Activated B cell treated with CpG ODN at 0.5 μM for 24 hours (primary cell): ENCODE measurements at regions of chrX and their contacts with region 1.

Region 1: DNA sequence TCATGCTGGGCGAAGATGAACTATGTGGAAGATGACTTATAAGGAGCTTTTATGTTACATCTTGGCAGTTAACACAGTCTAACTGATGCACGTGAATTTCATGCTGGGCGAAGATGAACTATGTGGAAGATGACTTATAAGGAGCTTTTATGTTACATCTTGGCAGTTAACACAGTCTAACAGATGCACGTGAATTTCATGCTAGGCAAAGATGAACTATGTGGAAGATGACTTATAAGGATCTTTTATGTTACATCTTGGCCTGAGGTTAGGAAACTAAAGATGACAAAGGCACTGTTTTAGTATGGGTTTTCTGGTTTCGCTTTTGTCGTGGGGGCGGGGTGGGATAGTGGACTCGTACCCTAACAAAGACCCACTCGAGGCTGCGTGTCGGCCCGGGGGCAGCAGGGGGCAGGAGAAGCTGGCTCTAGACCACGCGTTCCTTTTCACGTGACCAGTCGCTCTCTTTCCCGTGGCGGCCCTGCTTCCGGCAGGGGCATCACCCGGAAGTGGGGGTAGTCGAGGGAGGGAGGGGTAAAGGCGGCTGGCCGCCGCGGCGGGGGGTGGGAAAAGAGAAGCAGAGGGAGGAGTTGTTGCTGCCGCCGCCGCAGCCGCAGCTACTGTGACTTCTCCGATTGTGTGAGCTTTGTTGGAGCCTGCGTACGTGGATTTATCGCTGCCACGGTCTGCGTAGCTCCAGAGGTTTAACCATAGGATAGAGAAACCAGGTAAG is at the start of gene ATP7A:
- DNase-seq: peak; percentile 72
- ATAC-seq: peak; percentile 92
- H3K4me3 Mint-ChIP-seq: peak within 1 kb of the TSS; percentile 96
- H3K27ac Mint-ChIP-seq: peak within 1 kb of the TSS; percentile 93
- H3K4me1 Mint-ChIP-seq: peaks cover 21% of the 10 kb centered on the region
- H3K27me3 Mint-ChIP-seq: no peaks in the 10 kb centered on the region
- CTCF ChIP-seq: no peak
- total RNA-seq, gene ATP7A: 8.2 and 9.4 TPM in 2 replicates

Region 2: DNA sequence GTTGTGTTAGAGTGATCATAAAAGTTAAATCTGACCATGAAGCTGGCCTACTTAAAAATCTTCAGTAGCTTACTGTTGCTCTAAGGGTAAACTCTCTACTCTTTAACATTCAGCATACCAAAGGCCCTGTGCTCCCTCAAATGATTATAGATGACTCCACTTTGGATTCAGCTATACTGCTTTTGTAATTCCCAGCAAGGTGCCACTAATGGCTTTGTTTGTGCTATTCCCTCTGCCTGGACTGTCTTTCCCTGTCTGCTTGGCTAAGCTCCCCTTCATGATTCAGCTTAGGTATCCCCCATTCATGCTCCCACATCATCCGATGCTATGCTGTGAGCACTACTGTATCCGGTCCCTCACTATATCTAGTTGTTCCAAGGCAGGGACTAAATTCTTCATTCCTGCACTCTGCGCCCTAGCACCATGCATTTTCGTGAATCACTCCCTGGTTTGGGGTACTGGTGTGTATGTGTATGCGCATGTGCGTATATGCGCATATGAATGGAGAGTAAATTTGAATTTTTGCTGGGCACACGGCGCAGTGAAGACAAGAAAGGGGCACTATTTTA is 1737.9 kb before region 1 on chrX:
- CTCF ChIA-PET with region 1: no interaction called
- POLR2A ChIA-PET with region 1: no interaction called
- intact Hi-C with region 1: loop called (anchors 2 kb)
- DNase-seq: no peak
- ATAC-seq: peak; percentile 51
- H3K4me3 Mint-ChIP-seq: peak overlapping the region; percentile 97
- H3K27ac Mint-ChIP-seq: peak overlapping the region; percentile 92
- H3K4me1 Mint-ChIP-seq: peaks cover 42% of the 10 kb centered on the region
- H3K27me3 Mint-ChIP-seq: no peaks in the 10 kb centered on the region
- CTCF ChIP-seq: no peak

Region 3: GRCh38 chrX:78024349-78025108 is 114.3 kb after region 1 on chrX:
- CTCF ChIA-PET with region 1: interaction called, 24 read pairs
- POLR2A ChIA-PET with region 1: interaction called, 6 read pairs
- intact Hi-C with region 1: loop called (anchors 1 kb)
- DNase-seq: peak; percentile 12
- ATAC-seq: peak; percentile 60
- H3K4me3 Mint-ChIP-seq: no peak overlapping the region
- H3K27ac Mint-ChIP-seq: no peak overlapping the region
- H3K4me1 Mint-ChIP-seq: no peaks in the 10 kb centered on the region
- H3K27me3 Mint-ChIP-seq: no peaks in the 10 kb centered on the region
- CTCF ChIP-seq: no peak

Region 4: DNA sequence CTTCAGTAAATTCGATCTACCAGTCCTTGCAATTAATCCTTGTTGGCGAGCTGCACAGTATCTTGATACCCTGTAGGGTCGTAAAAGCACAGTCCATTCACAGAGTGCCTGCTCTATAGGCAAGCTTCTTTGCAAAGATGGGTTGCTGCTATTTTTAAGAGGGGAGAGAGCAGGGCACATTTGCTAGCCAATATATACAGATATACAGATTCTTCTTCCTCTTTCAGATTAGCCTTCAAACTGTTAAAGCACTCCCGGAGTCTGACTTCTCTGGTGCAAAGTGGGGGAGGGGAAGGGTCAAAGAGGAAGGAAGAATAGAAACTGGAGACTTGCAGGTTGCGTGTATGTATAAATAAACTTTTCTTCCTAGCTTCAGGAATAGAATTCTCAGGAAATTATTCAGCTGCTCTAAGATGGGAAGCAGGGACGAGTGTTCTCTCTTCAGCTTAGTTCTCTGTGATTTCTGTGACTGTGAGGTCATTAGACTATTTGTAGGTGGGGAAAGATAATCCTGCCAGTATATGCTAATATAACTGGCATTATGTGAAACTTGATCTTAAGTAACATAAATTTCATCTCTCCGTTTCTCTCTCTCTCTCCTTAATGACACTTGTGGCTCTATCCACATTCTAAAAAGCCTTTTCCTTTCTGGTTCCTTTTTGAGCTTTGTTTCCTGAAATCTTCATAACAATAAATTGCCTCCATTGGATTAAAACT is 417.3 kb after region 1 on chrX and contains the start of gene CYSLTR1:
- CTCF ChIA-PET with region 1: no interaction called
- POLR2A ChIA-PET with region 1: no interaction called
- intact Hi-C with region 1: loop called (anchors 1 kb)
- DNase-seq: no peak
- ATAC-seq: peak; percentile 64
- H3K4me3 Mint-ChIP-seq: peak within 1 kb of the TSS; percentile 89
- H3K27ac Mint-ChIP-seq: peak within 1 kb of the TSS; percentile 94
- H3K4me1 Mint-ChIP-seq: peaks cover 74% of the 10 kb centered on the region
- H3K27me3 Mint-ChIP-seq: no peaks in the 10 kb centered on the region
- CTCF ChIP-seq: no peak
- total RNA-seq, gene CYSLTR1: 20.5 and 20.7 TPM in 2 replicates

Region 5: DNA sequence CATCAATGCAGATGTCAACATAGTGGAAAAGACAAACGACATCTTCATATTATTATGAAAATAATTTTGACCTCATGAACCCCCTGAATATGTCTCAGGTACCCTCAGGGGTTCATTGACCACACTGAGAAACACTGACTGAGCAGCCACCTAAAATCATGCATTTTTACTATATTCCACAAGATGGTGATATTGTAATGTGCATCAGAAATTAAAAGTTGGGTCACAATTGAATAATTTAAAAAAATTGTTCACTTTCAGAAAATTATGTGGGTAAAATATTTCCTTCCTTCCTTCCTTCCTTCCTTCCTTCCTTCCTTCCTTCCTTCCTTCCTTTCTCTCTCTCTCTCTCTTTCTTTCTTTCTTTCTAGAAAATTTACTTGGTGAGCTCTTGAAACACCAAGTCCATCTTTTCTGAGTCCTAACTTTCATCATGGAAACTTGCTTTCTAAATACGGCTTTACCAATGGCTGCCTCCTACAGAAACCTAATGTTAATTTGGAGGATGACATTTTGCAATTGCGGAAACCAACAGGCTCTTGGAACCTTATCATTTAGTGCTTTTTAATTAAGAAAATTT is 645.2 kb after region 1 on chrX:
- CTCF ChIA-PET with region 1: no interaction called
- POLR2A ChIA-PET with region 1: interaction called, 16 read pairs
- intact Hi-C with region 1: no loop called
- DNase-seq: no peak
- ATAC-seq: no peak
- H3K4me3 Mint-ChIP-seq: no peak overlapping the region
- H3K27ac Mint-ChIP-seq: peak overlapping the region; percentile 75
- H3K4me1 Mint-ChIP-seq: peaks cover 13% of the 10 kb centered on the region
- H3K27me3 Mint-ChIP-seq: no peaks in the 10 kb centered on the region
- CTCF ChIP-seq: no peak